ENCODE measurements at regions of chr20 and their contacts with region 1.

Region 1: GRCh38 chr20:49323622-49324238 is 45.9 kb upstream of the ZNFX1 start:
- DNase-seq: peak; percentile 34
- ATAC-seq: peak; percentile 60
- H3K4me3 ChIP-seq: no peak overlapping the region
- H3K27ac ChIP-seq: no peak overlapping the region
- H3K4me1 ChIP-seq: peaks cover 2 to 8% of the 10 kb centered on the region in 2 experiments; a peak in 3 of 4 replicates
- H3K27me3 ChIP-seq: peaks cover 23% of the 10 kb centered on the region; the same call in 1 of the 2 replicates
- CTCF ChIP-seq: peak in 2 of 3 experiments; percentile 7 to 25; a peak in 1 of 6 replicates
- POLR2A ChIP-seq: no peak
- RAD21 ChIP-seq: peak; percentile 63

Region 2: GRCh38 chr20:48791015-48791514 is 532.7 kb before region 1 on chr20:
- CTCF ChIA-PET with region 1: no interaction called
- POLR2A ChIA-PET with region 1: no interaction called
- RAD21 ChIA-PET with region 1: no interaction called
- intact Hi-C with region 1: no loop called
- DNase-seq: no peak
- ATAC-seq: no peak
- H3K4me3 ChIP-seq: no peak overlapping the region
- H3K27ac ChIP-seq: no peak overlapping the region
- H3K4me1 ChIP-seq: no peaks in the 10 kb centered on the region; a peak in 1 of 4 replicates
- H3K27me3 ChIP-seq: peaks cover 3% of the 10 kb centered on the region; the same call in 1 of the 2 replicates
- CTCF ChIP-seq: no peak
- POLR2A ChIP-seq: no peak
- RAD21 ChIP-seq: no peak

Region 3: GRCh38 chr20:49132995-49133478 is 190.7 kb before region 1 on chr20:
- CTCF ChIA-PET with region 1: interaction called, 6 read pairs
- POLR2A ChIA-PET with region 1: no interaction called
- RAD21 ChIA-PET with region 1: no interaction called
- intact Hi-C with region 1: loop called (anchors 5 kb)
- DNase-seq: peak; percentile 47
- ATAC-seq: peak; percentile 78
- H3K4me3 ChIP-seq: no peak overlapping the region
- H3K27ac ChIP-seq: no peak overlapping the region
- H3K4me1 ChIP-seq: no peaks in the 10 kb centered on the region
- H3K27me3 ChIP-seq: no peaks in the 10 kb centered on the region
- CTCF ChIP-seq: peak; percentile 41 to 69 (median 66); a peak in 4 of 6 replicates
- POLR2A ChIP-seq: no peak
- RAD21 ChIP-seq: peak; percentile 74

Region 4: GRCh38 chr20:49245921-49246740 is 77.6 kb before region 1 on chr20:
- CTCF ChIA-PET with region 1: interaction called, 26 read pairs
- POLR2A ChIA-PET with region 1: interaction called, 3 read pairs
- RAD21 ChIA-PET with region 1: interaction called, 3 read pairs
- intact Hi-C with region 1: loop called (anchors 2 kb)
- DNase-seq: peak; percentile 23
- ATAC-seq: peak; percentile 88
- H3K4me3 ChIP-seq: no peak overlapping the region
- H3K27ac ChIP-seq: no peak overlapping the region
- H3K4me1 ChIP-seq: no peaks in the 10 kb centered on the region
- H3K27me3 ChIP-seq: no peaks in the 10 kb centered on the region
- CTCF ChIP-seq: peak; percentile 53 to 77 (median 77); a peak in 5 of 6 replicates
- POLR2A ChIP-seq: no peak
- RAD21 ChIP-seq: peak; percentile 65

Region 5: GRCh38 chr20:49278036-49278817 is 45.5 kb before region 1 on chr20 and contains the start of gene ZNFX1:
- CTCF ChIA-PET with region 1: interaction called, 3 read pairs
- POLR2A ChIA-PET with region 1: interaction called, 10 read pairs
- RAD21 ChIA-PET with region 1: no interaction called
- intact Hi-C with region 1: no loop called
- DNase-seq: peak; percentile 94
- ATAC-seq: peak; percentile 88
- H3K4me3 ChIP-seq: peak within 1 kb of the TSS; percentile 79 to 91
- H3K27ac ChIP-seq: peak within 1 kb of the TSS; percentile 96
- H3K4me1 ChIP-seq: peaks cover 28 to 53% of the 10 kb centered on the region in 2 experiments
- H3K27me3 ChIP-seq: no peaks in the 10 kb centered on the region
- CTCF ChIP-seq: no peak
- POLR2A ChIP-seq: peak; percentile 100
- RAD21 ChIP-seq: no peak
- total RNA-seq, gene ZNFX1: 24.1 TPM